AG04449 (cell line): ENCODE measurements at regions of chrX and their contacts with region 1.

Region 1: GRCh38 chrX:10189317-10190268 is 32.8 kb downstream of the CLCN4 start:
- DNase-seq: no peak
- H3K4me3 ChIP-seq: no peak overlapping the region
- CTCF ChIP-seq: peak; percentile 56

Region 2: DNA sequence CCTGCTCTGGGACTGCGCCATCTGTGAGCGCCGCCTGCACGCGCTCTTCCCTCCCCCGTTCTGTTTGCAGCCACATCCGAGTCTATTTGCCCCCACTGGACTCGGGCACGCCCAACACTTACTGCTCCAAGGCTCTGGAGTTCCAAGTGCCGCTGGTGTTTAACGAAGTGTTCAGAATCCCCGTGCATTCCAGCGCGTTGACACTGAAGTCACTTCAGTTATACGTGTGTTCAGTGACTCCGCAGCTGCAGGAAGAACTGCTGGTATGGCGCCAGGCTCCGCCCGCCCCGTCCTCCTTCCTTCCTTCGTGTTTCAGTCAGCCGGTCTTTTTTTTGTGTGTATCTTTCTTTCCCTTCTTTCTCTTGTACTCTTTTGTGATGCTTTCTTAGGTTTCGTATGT is 63.5 kb before region 1 on chrX:
- CTCF ChIA-PET with region 1: no interaction called
- POLR2A ChIA-PET with region 1: no interaction called
- DNase-seq: no peak
- H3K4me3 ChIP-seq: no peak overlapping the region
- CTCF ChIP-seq: no peak

Region 3: DNA sequence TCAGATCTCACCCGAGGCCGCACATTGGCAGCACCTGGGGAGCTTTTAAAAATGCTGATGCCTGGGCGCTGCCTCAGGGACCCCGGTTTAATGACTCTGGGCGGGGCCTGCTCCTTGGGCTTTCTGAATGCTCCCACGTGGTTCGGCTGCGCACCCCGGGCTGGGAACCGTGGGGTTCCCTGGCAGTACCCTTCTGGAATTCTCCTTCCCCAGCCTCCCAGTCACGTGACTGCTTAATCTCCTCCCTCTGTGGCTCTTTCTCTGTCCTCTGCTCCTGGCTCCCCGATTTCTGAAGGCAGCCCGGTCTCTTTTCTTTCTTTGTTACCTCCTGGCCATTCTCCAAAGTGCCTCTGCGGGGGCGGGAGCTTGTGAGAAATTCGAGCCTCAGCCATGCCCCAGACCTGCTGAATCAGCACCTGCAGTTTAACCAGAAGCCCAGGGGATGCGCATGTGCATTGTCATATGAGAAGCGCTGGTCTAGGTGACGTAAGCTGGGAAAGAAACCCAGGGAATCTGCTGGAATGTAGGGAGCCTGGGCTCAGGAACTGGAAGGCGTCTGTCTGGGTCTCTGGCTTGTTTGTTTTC is 16.2 kb before region 1 on chrX:
- CTCF ChIA-PET with region 1: interaction called, 14 read pairs
- POLR2A ChIA-PET with region 1: no interaction called
- DNase-seq: no peak
- H3K4me3 ChIP-seq: no peak overlapping the region
- CTCF ChIP-seq: no peak

Region 4: DNA sequence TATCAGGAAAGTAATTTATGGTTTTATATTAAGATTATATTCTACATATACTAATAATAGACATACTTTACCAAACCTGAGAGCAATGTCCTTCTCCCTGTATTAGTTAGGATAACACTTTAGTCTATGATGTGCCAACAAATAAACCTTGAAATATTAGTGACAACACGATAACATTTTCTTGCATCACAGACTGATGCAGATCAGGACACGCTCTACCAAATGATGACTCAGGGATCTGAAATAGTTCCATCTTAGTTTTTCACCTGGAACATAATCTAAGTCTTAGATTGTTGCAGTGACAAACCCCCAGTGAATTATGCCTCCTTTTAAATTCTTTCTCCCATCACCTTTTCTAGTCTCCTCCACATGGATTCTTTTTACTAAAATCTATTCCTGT is 181.4 kb after region 1 on chrX:
- CTCF ChIA-PET with region 1: no interaction called
- POLR2A ChIA-PET with region 1: no interaction called
- DNase-seq: no peak
- H3K4me3 ChIP-seq: no peak overlapping the region
- CTCF ChIP-seq: no peak

Region 5: GRCh38 chrX:10502961-10503360 is 313.4 kb after region 1 on chrX:
- CTCF ChIA-PET with region 1: no interaction called
- POLR2A ChIA-PET with region 1: no interaction called
- DNase-seq: no peak
- H3K4me3 ChIP-seq: no peak overlapping the region
- CTCF ChIP-seq: no peak

Region 6: GRCh38 chrX:10597871-10598270 is 408.3 kb after region 1 on chrX:
- CTCF ChIA-PET with region 1: interaction called, 36 read pairs
- POLR2A ChIA-PET with region 1: no interaction called
- DNase-seq: no peak
- H3K4me3 ChIP-seq: no peak overlapping the region
- CTCF ChIP-seq: peak; percentile 57

Region 7: GRCh38 chrX:10636337-10636736 is 446.7 kb after region 1 on chrX:
- CTCF ChIA-PET with region 1: interaction called, 79 read pairs
- POLR2A ChIA-PET with region 1: no interaction called
- DNase-seq: no peak
- H3K4me3 ChIP-seq: no peak overlapping the region
- CTCF ChIP-seq: peak; percentile 52

Region 8: GRCh38 chrX:10722851-10723250 is 533.3 kb after region 1 on chrX:
- CTCF ChIA-PET with region 1: interaction called, 82 read pairs
- POLR2A ChIA-PET with region 1: no interaction called
- DNase-seq: no peak
- H3K4me3 ChIP-seq: no peak overlapping the region
- CTCF ChIP-seq: peak; percentile 49

Region 9: GRCh38 chrX:11100281-11101035 is 910.9 kb after region 1 on chrX:
- CTCF ChIA-PET with region 1: interaction called, 19 read pairs
- POLR2A ChIA-PET with region 1: no interaction called
- DNase-seq: peak; percentile 28
- H3K4me3 ChIP-seq: no peak overlapping the region
- CTCF ChIP-seq: peak; percentile 31

Region 10: GRCh38 chrX:11137543-11138139 is 948.0 kb after region 1 on chrX:
- CTCF ChIA-PET with region 1: interaction called, 113 read pairs
- POLR2A ChIA-PET with region 1: no interaction called
- DNase-seq: no peak
- H3K4me3 ChIP-seq: no peak overlapping the region
- CTCF ChIP-seq: no peak

Region 11: DNA sequence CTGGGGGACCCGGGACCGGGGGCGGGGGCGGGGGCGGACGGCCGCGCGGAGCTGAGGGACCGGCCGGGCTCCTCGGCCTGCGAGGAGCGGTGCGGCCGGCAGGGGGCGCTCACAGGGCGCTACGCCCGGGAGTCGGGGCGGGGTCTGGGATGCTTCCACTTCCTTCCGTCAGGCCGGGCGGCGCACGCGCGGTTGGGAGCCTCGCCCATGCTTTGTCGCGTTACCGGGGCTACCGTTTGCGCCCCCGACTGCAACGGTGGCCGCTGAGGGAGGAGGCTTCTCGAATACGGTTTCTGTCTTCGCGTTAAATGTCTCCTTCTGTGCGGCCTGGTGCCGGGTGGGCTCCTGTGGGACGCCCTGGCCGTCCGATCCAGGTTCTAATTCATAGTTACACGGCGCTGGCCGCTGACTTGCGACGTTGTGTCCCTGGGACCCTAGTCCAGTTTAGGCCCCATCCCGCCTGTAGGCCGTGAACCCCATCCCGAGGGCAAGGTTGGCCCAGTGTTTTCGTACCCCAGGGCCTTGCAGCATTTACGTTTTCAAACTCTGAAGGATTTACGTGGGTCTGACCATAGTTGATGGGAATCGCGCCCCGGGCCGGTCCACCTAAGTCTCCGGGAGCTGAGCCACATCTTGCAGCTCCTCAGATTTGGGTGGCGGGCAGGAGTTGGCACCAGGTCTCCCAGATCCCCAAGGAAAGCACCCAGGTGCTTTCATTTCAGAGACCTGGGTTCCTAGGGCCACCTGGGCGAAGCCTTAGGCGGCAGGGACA is 1569.0 kb after region 1 on chrX:
- CTCF ChIA-PET with region 1: no interaction called
- POLR2A ChIA-PET with region 1: no interaction called
- DNase-seq: no peak
- H3K4me3 ChIP-seq: peak overlapping the region; percentile 78
- CTCF ChIP-seq: peak; percentile 54